Mammary epithelial cell (primary cell): ENCODE measurements at regions of chr11 and their contacts with region 1.

Region 1: DNA sequence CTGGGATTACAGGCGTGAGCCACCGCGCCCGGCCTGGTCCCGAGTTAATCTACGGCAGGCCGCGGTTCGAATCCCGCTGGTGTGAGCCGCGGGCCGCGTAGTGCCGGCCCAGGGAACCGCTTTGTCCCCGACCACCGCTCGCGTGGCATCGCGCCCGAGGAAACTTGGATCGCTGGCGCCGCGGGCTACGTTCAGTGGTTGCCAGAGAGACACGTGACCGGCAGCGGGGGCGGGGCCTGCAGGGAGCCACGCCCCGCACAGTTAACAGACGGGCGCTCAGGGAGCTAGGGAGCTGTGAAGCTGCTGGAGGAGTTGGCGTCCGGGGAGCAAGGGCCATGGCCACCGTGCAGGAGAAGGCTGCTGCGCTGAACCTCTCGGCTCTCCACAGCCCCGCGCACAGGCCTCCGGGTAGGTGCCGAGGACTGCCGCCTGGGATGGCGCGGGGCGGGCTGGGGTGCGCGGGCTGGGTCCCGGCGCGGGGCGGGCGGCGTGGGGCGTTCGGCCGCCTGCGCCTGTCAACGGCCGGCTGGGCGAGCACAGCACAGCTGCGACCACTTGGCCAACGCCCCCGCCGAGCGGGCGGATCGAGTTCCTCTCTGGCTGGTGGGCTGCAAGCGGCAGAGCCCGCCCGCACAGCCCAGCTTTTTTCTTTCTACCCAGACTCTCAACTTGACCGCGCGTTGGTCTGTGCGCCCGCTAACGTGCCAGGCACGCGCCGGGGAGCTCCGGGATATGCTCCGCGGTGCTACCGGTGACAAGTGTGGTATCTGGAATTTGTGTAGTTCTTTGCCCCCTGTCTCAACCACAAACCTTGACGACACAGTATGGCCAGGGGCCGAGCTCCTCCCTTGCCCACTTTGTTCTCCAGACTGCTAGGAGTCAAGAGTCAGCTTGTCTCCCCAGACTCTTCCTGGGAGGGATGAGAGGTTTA is at the start of gene DEPDC7:
- DNase-seq: peak; percentile 78
- H3K4me3 ChIP-seq: peak within 1 kb of the TSS; percentile 57 to 73 (median 70)
- H3K27ac ChIP-seq: no peak within 1 kb of the TSS
- H3K4me1 ChIP-seq: peaks cover 15% of the 10 kb centered on the region
- H3K27me3 ChIP-seq: no peaks in the 10 kb centered on the region
- CTCF ChIP-seq: no peak
- total RNA-seq, gene DEPDC7: 5.2 to 6.8 TPM

Region 2: DNA sequence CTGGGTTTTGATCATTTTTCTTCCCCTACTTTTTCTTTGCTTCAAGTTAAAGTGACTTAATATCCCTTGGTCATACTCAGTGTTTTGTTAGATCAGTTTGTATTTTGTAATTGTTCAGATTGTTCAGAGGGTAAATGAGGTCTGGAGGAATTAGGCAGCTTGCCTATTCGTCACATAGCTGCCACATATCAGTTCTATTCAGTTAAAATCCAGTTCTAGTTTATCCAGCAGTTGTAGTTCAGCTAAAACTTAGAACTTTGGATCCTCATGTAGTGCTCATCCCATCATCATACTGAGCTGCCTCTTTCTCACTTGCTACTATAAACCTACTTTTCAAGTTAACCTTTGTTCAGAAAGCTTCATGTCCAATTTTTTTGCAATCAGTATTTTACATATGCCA is 47.3 kb before region 1 on chr11:
- CTCF ChIA-PET with region 1: no interaction called
- dilution Hi-C with region 1: no loop called
- in situ Hi-C with region 1: no loop called
- intact Hi-C with region 1: no loop called
- DNase-seq: no peak
- H3K4me3 ChIP-seq: no peak overlapping the region
- H3K27ac ChIP-seq: no peak overlapping the region
- H3K4me1 ChIP-seq: no peaks in the 10 kb centered on the region
- H3K27me3 ChIP-seq: no peaks in the 10 kb centered on the region
- CTCF ChIP-seq: no peak

Region 3: GRCh38 chr11:32983506-32983905 is 32.4 kb before region 1 on chr11:
- CTCF ChIA-PET with region 1: no interaction called
- dilution Hi-C with region 1: loop called (anchors 5 kb)
- in situ Hi-C with region 1: no loop called
- intact Hi-C with region 1: no loop called
- DNase-seq: no peak
- H3K4me3 ChIP-seq: no peak overlapping the region
- H3K27ac ChIP-seq: no peak overlapping the region
- H3K4me1 ChIP-seq: no peaks in the 10 kb centered on the region
- H3K27me3 ChIP-seq: no peaks in the 10 kb centered on the region
- CTCF ChIP-seq: no peak

Region 4: GRCh38 chr11:33039274-33040032 is 23.6 kb after region 1 on chr11 and contains the start of gene TCP11L1:
- CTCF ChIA-PET with region 1: no interaction called
- dilution Hi-C with region 1: no loop called
- in situ Hi-C with region 1: no loop called
- intact Hi-C with region 1: loop called (anchors 1 kb)
- DNase-seq: peak; percentile 91
- H3K4me3 ChIP-seq: peak within 1 kb of the TSS; percentile 63 to 90 (median 68)
- H3K27ac ChIP-seq: peak within 1 kb of the TSS; percentile 92
- H3K4me1 ChIP-seq: peaks cover 25% of the 10 kb centered on the region
- H3K27me3 ChIP-seq: no peaks in the 10 kb centered on the region
- CTCF ChIP-seq: no peak
- total RNA-seq, gene TCP11L1: 32.0 to 51.2 TPM